Head of caudate nucleus (tissue), 42 donors: ENCODE measurements at regions of chr11 and their contacts with region 1.

Region 1: DNA sequence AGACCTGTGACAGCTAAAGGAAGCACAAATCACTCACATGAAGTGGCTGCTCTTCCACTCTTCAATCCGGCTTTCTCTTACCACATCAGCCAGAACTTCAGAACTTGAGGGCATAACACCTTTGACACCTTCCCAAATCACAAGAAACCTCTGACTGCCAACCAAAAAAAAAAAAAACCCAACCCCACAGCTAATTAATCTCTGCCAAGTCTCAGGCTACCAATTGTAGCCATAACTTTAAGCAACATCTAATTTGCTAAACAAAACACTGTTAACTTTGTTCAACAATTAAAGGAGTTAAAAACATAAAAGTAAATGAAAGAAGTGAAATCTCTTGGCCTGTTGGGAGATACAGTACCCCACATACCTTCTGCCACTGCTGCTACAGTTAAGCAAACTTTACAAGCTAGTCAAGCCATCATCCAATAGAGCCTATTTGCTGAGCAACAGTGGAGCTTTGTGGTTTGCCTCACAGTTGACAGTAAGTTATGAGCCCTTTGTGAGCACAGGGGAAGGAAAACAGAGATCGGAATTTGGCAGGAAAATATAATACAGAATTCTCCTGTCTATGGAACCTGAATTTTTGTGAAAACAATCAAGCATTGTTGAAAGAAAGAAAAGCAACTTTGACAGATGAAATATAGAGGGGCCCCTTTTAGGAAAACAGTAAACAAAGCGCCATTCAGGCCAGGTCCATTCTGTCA is at the start of gene SOX6:
- DNase-seq: peak in 23 of 42 donors; percentile 5 to 66 (median 20)

Region 2: DNA sequence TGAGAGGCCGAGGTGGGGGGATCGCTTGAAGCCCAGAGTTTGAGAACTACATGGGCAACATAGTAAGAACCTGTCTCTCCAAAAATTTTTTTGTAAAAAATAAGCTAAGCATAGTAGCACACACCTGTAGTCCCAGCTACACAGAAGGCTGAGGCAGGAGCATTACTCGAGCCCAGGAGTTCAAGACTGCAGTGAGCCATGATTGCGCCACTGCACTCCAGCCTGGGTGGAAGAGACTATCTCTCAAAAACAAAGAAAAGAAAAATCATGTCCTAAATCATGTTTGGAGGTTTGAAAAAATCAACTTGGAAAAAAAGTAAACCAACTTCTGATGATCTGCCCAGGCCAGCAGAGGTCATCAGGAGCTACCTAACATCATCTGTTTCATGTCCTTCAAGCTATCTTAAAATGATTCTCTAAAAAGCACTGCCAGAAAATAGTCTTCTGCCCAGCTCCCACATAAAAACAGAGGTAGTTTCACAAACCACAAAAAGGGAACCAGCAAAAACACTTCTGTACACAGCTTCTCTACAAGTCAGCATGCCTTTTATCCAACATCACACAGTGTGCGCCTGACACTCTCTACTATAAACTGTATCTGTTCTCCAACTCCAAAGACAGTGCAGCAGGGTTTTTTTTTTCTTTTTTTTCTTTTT is 164.9 kb before region 1 on chr11:
- intact Hi-C with region 1: loop called (anchors 10 kb)
- DNase-seq: peak in 2 of 42 donors; percentile 7 to 16

Region 3: DNA sequence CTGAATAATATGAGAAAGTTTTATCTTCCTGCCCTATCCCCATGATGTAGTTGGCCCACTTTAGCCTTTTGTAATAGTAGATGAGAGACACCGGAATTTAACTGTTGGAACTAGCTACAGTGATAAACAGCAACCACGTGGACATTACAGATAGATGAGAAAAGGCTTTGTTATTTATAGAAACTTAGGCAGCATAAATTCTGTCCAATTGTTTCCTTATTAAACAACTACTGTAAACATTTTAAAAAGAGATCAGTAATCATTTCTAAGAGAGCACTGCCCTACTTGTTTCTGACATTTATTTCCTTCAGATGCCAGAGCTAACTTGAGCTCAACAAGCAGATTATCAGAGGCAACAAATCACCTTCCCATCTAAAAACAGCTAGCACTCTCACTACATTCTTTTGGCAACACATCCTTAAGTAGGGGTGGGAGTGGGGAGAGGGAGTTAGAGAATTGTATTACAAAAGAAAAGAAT is 63.0 kb before region 1 on chr11:
- intact Hi-C with region 1: no loop called
- DNase-seq: no peak

Region 4: GRCh38 chr11:16402654-16403447 is 46.6 kb after region 1 on chr11:
- intact Hi-C with region 1: loop called (anchors 2 kb)
- DNase-seq: peak in 34 of 42 donors; percentile 5 to 77 (median 32)